ENCODE measurements at regions of chr15 and their contacts with region 1.

Region 1: GRCh38 chr15:90660195-90660998 is 56.7 kb upstream of the BLM start:
- DNase-seq: peak; percentile 86
- ATAC-seq: peak; percentile 72
- H3K4me3 ChIP-seq: peak overlapping the region; percentile 58
- H3K27ac ChIP-seq: peak overlapping the region; percentile 100
- H3K4me1 ChIP-seq: peaks cover 73% of the 10 kb centered on the region
- H3K27me3 ChIP-seq: no peaks in the 10 kb centered on the region
- CTCF ChIP-seq: no peak
- EP300 ChIP-seq: 0 out of 4 replicates have a peak, but pooled peaks of 1 of the 2 experiments have one; percentile 29
- POLR2A ChIP-seq: peak; percentile 77
- RAD21 ChIP-seq: no peak

Region 2: GRCh38 chr15:90419738-90420406 is 240.5 kb before region 1 on chr15:
- CTCF ChIA-PET with region 1: no interaction called
- POLR2A ChIA-PET with region 1: no interaction called
- RAD21 ChIA-PET with region 1: no interaction called
- SMC1A ChIA-PET with region 1: no interaction called
- in situ Hi-C with region 1: no loop called
- intact Hi-C with region 1: no loop called
- DNase-seq: peak; percentile 19
- ATAC-seq: peak; percentile 91
- H3K4me3 ChIP-seq: no peak overlapping the region
- H3K27ac ChIP-seq: peak overlapping the region; percentile 73
- H3K4me1 ChIP-seq: peaks cover 30% of the 10 kb centered on the region
- H3K27me3 ChIP-seq: no peaks in the 10 kb centered on the region
- CTCF ChIP-seq: no peak
- EP300 ChIP-seq: no peak
- POLR2A ChIP-seq: no peak
- RAD21 ChIP-seq: no peak

Region 3: GRCh38 chr15:90686435-90687218 is 26.2 kb after region 1 on chr15:
- CTCF ChIA-PET with region 1: interaction called, 22 read pairs
- POLR2A ChIA-PET with region 1: interaction called, 75 read pairs
- RAD21 ChIA-PET with region 1: interaction called, 52 read pairs
- SMC1A ChIA-PET with region 1: interaction called, 112 read pairs
- in situ Hi-C with region 1: loop called (anchors 5 kb)
- intact Hi-C with region 1: loop called (anchors 1 kb)
- DNase-seq: peak; percentile 92
- ATAC-seq: peak; percentile 85
- H3K4me3 ChIP-seq: no peak overlapping the region
- H3K27ac ChIP-seq: peak overlapping the region; percentile 99
- H3K4me1 ChIP-seq: peaks cover 53% of the 10 kb centered on the region
- H3K27me3 ChIP-seq: no peaks in the 10 kb centered on the region
- CTCF ChIP-seq: no peak
- EP300 ChIP-seq: peak; percentile 91 to 93
- POLR2A ChIP-seq: no peak
- RAD21 ChIP-seq: no peak; the same call in 1 of the 2 replicates

Region 4: DNA sequence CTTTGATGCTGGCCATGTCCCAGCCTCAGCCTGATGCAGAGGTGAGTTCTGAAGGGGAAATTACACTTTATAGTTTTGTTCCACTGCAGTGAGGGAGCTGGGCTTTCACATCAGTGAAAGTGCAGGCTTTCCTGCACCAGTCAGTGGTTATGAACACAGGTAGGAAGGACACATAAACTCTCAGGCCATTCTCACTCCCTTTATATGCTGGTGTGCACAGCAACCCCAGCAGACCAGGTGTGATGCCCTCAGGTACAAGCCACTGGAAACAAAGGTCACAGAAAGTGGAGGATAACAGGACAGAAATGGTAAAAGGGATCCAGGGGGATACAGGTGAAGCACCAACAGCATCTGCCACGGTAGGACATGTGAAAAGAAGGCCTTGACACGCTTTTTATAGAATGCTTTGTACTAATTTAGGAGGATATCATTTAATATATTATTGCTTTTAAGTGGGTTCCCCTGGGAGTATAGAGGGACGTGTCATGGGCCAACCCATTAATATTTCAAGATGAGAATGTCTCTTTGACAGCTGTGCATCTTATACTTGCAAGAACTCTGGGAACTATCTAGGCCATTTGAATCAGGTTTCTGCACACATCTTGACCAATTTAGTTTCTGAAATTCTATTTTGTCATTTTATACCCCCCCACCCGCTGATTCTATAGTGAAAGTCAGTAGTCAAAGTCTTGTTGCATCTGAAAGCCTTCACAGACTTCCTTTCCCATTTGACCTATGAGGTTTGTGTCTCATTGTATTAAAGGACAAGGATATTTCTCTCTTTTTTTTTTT is 31.8 kb after region 1 on chr15:
- CTCF ChIA-PET with region 1: interaction called, 22 read pairs
- POLR2A ChIA-PET with region 1: interaction called, 75 read pairs
- RAD21 ChIA-PET with region 1: interaction called, 52 read pairs
- SMC1A ChIA-PET with region 1: interaction called, 112 read pairs
- in situ Hi-C with region 1: loop called (anchors 5 kb)
- intact Hi-C with region 1: loop called (anchors 1 kb)
- DNase-seq: peak; percentile 84
- ATAC-seq: peak; percentile 73
- H3K4me3 ChIP-seq: no peak overlapping the region
- H3K27ac ChIP-seq: peak overlapping the region; percentile 99
- H3K4me1 ChIP-seq: peaks cover 41% of the 10 kb centered on the region
- H3K27me3 ChIP-seq: no peaks in the 10 kb centered on the region
- CTCF ChIP-seq: no peak
- EP300 ChIP-seq: no peak
- POLR2A ChIP-seq: peak; percentile 68
- RAD21 ChIP-seq: peak; percentile 19; the same call in 1 of the 2 replicates

Region 5: DNA sequence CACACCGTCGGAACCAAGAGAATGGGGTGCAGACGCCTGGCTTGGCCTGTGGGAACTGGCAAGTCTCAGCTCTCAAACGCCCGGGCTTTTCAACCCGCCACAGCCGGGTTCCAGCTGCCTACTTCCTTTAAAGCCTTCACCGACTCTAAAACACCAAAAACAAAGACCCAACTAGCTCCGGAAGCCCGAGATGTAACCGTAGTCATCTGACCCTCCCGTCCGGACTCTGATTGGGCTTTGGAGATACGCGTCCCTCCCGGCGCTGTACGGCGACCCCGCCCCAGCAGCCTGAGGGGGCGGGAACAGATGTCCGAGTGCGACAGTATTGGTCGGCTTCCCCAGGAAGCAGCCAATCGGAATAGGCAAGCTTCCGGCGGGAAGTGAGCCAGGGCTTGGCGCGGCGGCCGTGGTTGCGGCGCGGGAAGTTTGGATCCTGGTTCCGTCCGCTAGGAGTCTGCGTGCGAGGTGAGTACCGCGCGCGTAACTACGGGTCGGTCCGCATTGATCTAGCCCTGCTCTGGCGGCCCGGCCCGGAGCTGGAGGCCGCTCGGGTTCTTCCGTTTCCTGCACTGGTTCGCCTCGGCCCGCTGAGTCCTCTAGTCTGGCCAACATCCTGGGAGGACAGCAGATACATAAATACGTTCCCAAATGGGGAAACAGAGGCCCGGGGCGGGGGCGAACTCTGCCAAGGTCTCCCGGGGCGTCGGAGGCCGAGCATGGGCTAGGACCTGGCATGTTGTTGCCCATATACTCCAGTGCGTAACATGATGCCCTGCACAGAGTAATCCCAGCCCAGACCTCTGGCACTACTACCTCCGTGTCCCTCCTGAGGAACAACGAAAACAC is 56.8 kb after region 1 on chr15 and contains the start of gene BLM:
- CTCF ChIA-PET with region 1: interaction called, 3 read pairs
- POLR2A ChIA-PET with region 1: interaction called, 5 read pairs
- RAD21 ChIA-PET with region 1: interaction called, 4 read pairs
- SMC1A ChIA-PET with region 1: interaction called, 3 read pairs
- in situ Hi-C with region 1: no loop called
- intact Hi-C with region 1: loop called (anchors 1 kb)
- DNase-seq: peak; percentile 93
- ATAC-seq: peak; percentile 99
- H3K4me3 ChIP-seq: peak within 1 kb of the TSS; percentile 91
- H3K27ac ChIP-seq: peak within 1 kb of the TSS; percentile 94
- H3K4me1 ChIP-seq: peaks cover 15% of the 10 kb centered on the region
- H3K27me3 ChIP-seq: no peaks in the 10 kb centered on the region
- CTCF ChIP-seq: peak in 1 of 3 experiments; percentile 22; a peak in 1 of 6 replicates
- EP300 ChIP-seq: no peak
- POLR2A ChIP-seq: peak; percentile 85
- RAD21 ChIP-seq: no peak
- polyA plus RNA-seq, gene BLM: 25.3 to 28.2 TPM